Activated CD8-positive, alpha-beta T cell treated with anti-CD3 and anti-CD28 coated beads, Interleukin-2, amount 10 ng/mL, durations not matched to agents 7 days and 5 days (primary cell): ENCODE measurements at regions of chr21 and their contacts with region 1.

Region 1: GRCh38 chr21:32403201-32403777 is 9.2 kb upstream of the EVA1C start:
- DNase-seq: peak; percentile 74
- ATAC-seq: peak; percentile 87
- H3K4me3 Mint-ChIP-seq: no peak overlapping the region
- H3K27ac Mint-ChIP-seq: no peak overlapping the region
- H3K4me1 Mint-ChIP-seq: peaks cover 13% of the 10 kb centered on the region
- H3K27me3 Mint-ChIP-seq: peaks cover 14% of the 10 kb centered on the region

Region 2: DNA sequence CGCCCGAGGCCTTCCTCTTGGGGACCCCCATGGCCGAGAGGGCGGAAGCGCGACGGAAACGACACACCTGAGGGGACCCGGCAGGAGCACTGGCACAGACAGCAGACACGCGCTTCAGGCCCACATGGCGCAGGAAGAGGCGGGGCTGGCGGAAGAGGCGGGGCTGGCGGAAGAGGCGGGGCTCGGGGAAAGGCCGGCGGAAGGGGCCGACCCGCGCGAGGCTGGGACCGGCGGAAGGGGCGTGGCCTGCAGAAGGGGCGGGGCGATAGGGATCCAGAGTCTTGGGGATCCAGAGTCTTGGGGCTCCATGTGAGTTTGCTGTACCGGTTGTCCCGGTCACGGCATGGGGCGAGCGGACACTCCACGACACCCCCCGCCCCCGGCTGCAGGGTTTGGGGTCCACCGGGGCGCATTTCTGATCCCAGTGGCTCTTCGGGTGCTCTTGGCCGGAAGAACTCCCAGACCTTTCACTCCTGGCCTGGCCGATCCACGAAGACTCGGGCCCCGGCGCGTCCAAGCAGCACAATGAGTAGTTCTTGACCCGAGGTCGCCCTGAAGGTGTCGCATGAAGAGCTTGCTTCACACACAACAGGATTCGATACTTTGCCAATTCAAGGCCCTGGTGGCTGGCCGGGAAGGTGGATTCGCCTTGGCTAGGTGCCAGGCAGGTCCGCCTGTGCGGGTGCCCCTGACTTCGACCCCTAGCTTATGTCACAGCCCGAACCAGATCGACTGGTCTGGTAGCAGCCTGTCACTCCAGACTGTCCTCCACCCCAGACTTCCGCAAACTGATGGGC is 10.2 kb before region 1 on chr21 and contains the start of gene URB1:
- CTCF ChIA-PET with region 1: interaction called, 15 read pairs
- POLR2A ChIA-PET with region 1: interaction called, 3 read pairs
- DNase-seq: peak; percentile 95
- ATAC-seq: peak; percentile 98
- H3K4me3 Mint-ChIP-seq: peak within 1 kb of the TSS; percentile 81
- H3K27ac Mint-ChIP-seq: peak within 1 kb of the TSS; percentile 82
- H3K4me1 Mint-ChIP-seq: peaks cover 39% of the 10 kb centered on the region
- H3K27me3 Mint-ChIP-seq: peaks cover 6% of the 10 kb centered on the region
- total RNA-seq, gene URB1: 17.4 to 19.4 TPM

Region 3: DNA sequence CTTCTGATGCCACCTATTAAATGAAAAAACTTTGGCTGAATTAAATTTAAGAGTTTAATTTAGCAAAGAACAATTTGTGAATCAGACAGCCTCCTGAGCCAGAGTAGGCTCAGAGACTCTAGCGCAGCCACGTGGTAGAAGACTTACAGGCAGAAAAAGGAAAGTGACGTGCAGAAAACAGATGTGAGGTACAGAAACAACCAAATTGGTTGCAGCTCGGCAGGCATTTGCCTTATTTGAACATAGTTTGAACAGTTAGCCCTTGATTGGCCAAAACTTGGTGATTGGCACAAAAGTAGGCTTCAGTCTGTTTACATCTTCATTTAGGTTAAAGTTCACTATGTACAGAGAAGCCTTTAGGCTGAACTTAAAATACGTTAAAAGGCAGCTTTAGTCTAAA is 159.1 kb after region 1 on chr21:
- CTCF ChIA-PET with region 1: interaction called, 48 read pairs
- POLR2A ChIA-PET with region 1: no interaction called
- DNase-seq: peak; percentile 59
- ATAC-seq: peak; percentile 61
- H3K4me3 Mint-ChIP-seq: no peak overlapping the region
- H3K27ac Mint-ChIP-seq: no peak overlapping the region
- H3K4me1 Mint-ChIP-seq: peaks cover 7% of the 10 kb centered on the region
- H3K27me3 Mint-ChIP-seq: no peaks in the 10 kb centered on the region

Region 4: DNA sequence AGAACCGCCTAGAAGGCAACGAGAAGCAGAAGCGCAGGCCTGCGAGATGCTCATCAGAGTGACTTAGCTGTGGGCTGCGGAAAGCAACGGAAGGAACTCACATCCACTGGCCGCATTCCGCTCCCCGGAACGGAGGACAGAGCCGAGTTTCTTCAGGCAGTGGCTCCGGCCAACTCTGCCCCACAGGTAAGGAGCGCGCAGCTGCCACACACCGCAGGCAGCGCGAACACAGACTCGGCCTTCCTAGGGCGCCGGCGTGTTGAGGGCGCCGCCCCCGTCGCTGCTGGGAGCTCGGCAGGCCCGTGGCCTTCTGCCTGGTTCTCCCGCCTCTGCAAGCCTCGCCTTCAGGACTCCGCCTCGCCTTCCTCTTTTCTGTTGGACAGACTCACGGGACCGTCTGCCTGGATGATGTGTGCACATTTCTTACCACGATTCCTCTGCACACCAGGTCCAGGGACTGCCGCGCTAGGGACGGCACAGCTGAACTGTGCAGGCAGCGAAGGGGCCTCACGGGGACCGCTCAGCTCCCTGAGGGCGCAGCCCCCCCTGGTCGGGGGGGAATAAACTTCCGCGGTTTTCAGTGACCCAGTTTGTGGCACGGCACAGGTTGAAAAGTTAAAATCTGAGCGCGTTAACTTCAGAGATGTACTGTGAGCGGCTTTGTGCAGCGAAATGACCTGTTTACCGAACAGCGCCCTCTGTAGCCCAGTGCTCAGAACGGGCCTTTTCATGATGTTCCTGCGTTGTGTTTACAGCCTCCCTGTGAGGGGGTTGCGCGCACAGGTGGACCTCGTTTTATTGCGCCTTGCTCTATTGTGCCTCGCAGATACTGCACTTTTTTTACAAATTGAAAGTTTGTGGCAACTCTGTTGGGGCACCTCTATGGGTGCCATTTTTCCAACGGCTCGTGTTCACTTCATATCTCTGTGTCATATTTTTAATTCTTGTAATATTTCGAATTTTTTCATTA is 166.3 kb after region 1 on chr21:
- CTCF ChIA-PET with region 1: interaction called, 48 read pairs
- POLR2A ChIA-PET with region 1: no interaction called
- DNase-seq: peak; percentile 90
- ATAC-seq: peak; percentile 97
- H3K4me3 Mint-ChIP-seq: peak overlapping the region; percentile 79
- H3K27ac Mint-ChIP-seq: peak overlapping the region; percentile 83
- H3K4me1 Mint-ChIP-seq: peaks cover 22% of the 10 kb centered on the region
- H3K27me3 Mint-ChIP-seq: no peaks in the 10 kb centered on the region